Activated CD4-positive, alpha-beta memory T cell treated with anti-CD3 and anti-CD28 coated beads for 36 hours (primary cell): ENCODE measurements at regions of chr1 and their contacts with region 1.

Region 1: DNA sequence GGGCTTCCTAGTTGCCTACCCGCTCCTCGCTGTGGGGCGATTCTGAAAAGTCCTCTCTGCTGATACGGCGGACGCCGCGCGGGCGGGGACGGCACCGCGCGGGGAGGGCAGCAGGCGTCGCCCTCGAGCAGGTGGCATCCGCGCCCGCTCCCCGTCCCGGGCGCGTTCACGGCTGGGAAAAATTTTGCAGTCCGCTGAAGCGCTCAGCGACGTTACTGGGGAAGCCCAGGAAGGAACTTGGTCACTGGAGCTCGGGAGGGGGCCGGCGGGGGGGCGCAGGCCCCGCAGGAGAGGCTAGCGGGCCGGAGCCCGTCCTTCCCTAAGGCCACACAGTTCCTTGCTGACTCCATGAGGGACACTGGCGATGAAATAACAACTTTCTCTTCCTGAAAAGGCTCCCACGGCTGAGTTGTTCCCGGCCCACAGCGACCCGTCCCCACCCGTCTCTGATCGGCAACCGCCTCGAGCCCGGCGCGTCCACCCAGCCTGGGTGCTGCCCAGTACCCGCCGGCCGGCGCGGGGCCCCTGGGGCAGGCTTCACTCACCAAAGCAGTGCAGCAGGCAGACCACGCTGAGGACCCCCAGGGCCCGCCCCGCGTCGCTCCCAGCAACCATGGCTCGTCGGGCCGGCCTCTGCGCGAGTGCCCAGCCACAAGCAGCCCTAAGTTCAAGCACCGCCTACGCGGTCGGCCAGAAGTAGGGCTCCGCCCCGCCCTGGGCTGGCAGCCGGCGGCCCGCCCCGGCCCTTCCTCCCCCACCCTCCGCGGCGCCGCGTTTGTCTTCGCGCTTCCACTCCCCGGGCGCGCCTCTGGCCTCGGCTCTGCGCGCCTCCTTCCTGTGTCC is at the start of gene CD58:
- DNase-seq: peak; percentile 92
- H3K4me3 Mint-ChIP-seq: peak within 1 kb of the TSS; percentile 99
- H3K27ac Mint-ChIP-seq: peak within 1 kb of the TSS; percentile 93
- H3K4me1 Mint-ChIP-seq: peaks cover 72% of the 10 kb centered on the region
- H3K27me3 Mint-ChIP-seq: no peaks in the 10 kb centered on the region
- total RNA-seq, gene CD58: 21.9 to 27.2 TPM

Region 2: GRCh38 chr1:116133696-116134650 is 436.6 kb before region 1 on chr1:
- CTCF ChIA-PET with region 1: interaction called, 4 read pairs
- POLR2A ChIA-PET with region 1: no interaction called
- intact Hi-C with region 1: loop called (anchors 10 kb)
- DNase-seq: no peak
- H3K4me3 Mint-ChIP-seq: no peak overlapping the region
- H3K27ac Mint-ChIP-seq: no peak overlapping the region
- H3K4me1 Mint-ChIP-seq: peaks cover 9% of the 10 kb centered on the region
- H3K27me3 Mint-ChIP-seq: peaks cover 9% of the 10 kb centered on the region

Region 3: DNA sequence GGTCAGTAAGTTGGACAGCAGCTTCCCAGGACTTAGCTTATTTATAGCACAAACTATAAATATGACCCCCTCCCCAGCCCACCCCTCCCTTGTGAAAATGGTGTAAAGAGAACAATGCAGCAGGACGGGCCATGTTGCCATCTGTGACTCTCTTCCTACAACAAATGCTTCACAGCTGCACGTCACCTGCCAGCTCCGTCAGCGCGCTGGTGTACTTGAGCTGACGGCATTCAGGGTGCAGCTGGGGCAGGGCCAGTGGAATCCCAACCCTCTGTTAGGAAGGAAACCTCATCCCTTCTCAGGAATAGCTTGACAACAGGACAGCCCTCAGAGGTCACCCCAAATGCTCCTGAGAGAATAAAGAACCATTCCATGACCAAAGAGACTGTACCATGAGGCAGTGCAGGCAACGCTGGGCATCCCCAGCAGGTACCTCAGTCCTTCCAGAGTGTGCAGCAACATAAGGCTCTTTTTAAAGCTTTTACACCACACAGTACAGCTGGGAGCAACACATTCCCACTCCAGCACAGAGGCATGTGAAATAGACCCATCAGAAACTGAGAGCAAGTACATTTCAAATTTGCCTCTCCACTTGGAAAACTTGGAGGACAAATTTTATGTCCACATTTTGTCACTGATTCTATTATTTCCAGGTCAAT is 112.5 kb before region 1 on chr1:
- CTCF ChIA-PET with region 1: no interaction called
- POLR2A ChIA-PET with region 1: no interaction called
- intact Hi-C with region 1: no loop called
- DNase-seq: no peak
- H3K4me3 Mint-ChIP-seq: no peak overlapping the region
- H3K27ac Mint-ChIP-seq: no peak overlapping the region
- H3K4me1 Mint-ChIP-seq: no peaks in the 10 kb centered on the region
- H3K27me3 Mint-ChIP-seq: no peaks in the 10 kb centered on the region

Region 4: GRCh38 chr1:116529199-116529616 is 41.4 kb before region 1 on chr1:
- CTCF ChIA-PET with region 1: no interaction called
- POLR2A ChIA-PET with region 1: no interaction called
- intact Hi-C with region 1: no loop called
- DNase-seq: no peak
- H3K4me3 Mint-ChIP-seq: no peak overlapping the region
- H3K27ac Mint-ChIP-seq: no peak overlapping the region
- H3K4me1 Mint-ChIP-seq: peaks cover 5% of the 10 kb centered on the region
- H3K27me3 Mint-ChIP-seq: no peaks in the 10 kb centered on the region

Region 5: GRCh38 chr1:116556289-116557006 is 14.1 kb before region 1 on chr1:
- CTCF ChIA-PET with region 1: interaction called, 9 read pairs
- POLR2A ChIA-PET with region 1: interaction called, 22 read pairs
- intact Hi-C with region 1: loop called (anchors 1 kb)
- DNase-seq: peak; percentile 91
- H3K4me3 Mint-ChIP-seq: peak overlapping the region; percentile 9
- H3K27ac Mint-ChIP-seq: peak overlapping the region; percentile 91
- H3K4me1 Mint-ChIP-seq: peaks cover 80% of the 10 kb centered on the region
- H3K27me3 Mint-ChIP-seq: no peaks in the 10 kb centered on the region

Region 6: DNA sequence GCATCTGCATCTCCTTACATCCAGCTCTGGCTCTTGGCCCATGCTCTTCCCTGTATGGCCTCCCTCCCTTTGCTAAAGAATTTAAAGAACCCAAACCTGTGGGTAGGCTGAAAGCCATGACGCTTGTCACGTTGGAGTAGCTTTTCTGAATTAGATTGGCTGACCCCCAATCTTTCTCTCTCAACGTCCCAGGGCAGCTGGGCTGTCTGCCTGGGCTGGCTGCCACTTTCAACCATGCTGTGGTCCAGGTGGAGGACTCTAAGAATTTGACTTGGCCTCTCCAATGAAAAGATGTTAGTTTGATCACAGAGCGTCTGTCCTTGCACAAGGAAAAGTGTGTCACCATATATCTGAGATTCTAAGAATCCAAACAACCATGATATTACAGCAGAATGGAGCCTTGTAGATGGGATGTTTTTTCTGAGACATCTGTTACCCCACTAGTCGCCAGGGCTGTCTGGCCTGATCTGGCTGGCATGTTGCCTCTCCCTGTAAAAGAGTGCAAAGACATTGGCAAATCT is 103.5 kb after region 1 on chr1:
- CTCF ChIA-PET with region 1: interaction called, 64 read pairs
- POLR2A ChIA-PET with region 1: interaction called, 5 read pairs
- intact Hi-C with region 1: loop called (anchors 1 kb)
- DNase-seq: no peak
- H3K4me3 Mint-ChIP-seq: no peak overlapping the region
- H3K27ac Mint-ChIP-seq: no peak overlapping the region
- H3K4me1 Mint-ChIP-seq: peaks cover 3% of the 10 kb centered on the region
- H3K27me3 Mint-ChIP-seq: peaks cover 17% of the 10 kb centered on the region

Region 7: GRCh38 chr1:116934586-116935207 is 364.1 kb after region 1 on chr1:
- CTCF ChIA-PET with region 1: interaction called, 7 read pairs
- POLR2A ChIA-PET with region 1: no interaction called
- intact Hi-C with region 1: loop called (anchors 1 kb)
- DNase-seq: no peak
- H3K4me3 Mint-ChIP-seq: no peak overlapping the region
- H3K27ac Mint-ChIP-seq: no peak overlapping the region
- H3K4me1 Mint-ChIP-seq: peaks cover 26% of the 10 kb centered on the region
- H3K27me3 Mint-ChIP-seq: no peaks in the 10 kb centered on the region

Region 8: DNA sequence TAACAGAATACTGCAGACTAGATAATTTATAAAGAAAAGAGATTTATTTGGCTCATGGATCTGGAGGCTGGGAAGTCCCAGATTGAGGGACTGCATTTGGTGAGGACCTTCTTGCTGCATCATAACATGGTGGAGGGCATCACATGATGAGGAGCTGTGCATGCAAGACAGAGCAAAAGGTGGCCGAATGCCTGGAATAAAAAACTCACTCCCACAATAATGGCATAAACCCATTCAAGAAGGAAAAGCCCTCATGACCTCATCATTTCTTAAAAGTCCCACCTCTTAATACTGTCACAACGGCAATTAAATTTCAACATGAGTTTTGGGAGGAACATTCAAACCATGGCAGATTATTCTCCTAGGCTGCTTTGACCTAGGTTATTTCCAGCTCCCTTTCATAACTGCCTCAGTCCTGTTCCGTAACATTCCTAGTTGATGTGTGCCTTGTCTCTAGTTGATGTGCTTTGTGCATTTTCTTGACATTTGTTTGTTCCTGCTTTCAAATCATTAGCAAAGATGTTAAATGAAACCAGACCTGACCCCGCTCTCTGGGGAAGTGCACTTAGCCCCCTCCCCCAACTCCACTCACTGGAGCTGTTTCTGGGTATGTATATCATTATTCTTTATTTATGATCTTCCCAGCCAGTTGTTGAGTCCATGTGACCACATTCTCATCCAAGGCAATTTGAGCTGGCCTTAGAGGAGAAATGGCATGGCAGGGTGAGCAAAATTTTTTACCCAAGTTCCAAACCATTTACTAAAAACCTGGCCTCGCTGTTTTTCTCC is 1210.3 kb after region 1 on chr1:
- CTCF ChIA-PET with region 1: no interaction called
- POLR2A ChIA-PET with region 1: no interaction called
- intact Hi-C with region 1: no loop called
- DNase-seq: no peak
- H3K4me3 Mint-ChIP-seq: no peak overlapping the region
- H3K27ac Mint-ChIP-seq: no peak overlapping the region
- H3K4me1 Mint-ChIP-seq: peaks cover 6% of the 10 kb centered on the region
- H3K27me3 Mint-ChIP-seq: no peaks in the 10 kb centered on the region